Activated B cell treated with CpG ODN at 0.5 μM for 24 hours (primary cell): ENCODE measurements at regions of chr11 and their contacts with region 1.

Region 1: GRCh38 chr11:117946842-117947526 is 17.8 kb upstream of the TMPRSS13 start:
- DNase-seq: peak; percentile 79
- ATAC-seq: peak; percentile 34
- H3K4me3 Mint-ChIP-seq: no peak overlapping the region
- H3K27ac Mint-ChIP-seq: peak overlapping the region; percentile 62
- H3K4me1 Mint-ChIP-seq: peaks cover 60% of the 10 kb centered on the region
- H3K27me3 Mint-ChIP-seq: peaks cover 2% of the 10 kb centered on the region
- CTCF ChIP-seq: peak; percentile 86

Region 2: GRCh38 chr11:117807482-117808327 is 139.3 kb before region 1 on chr11:
- CTCF ChIA-PET with region 1: interaction called, 110 read pairs
- POLR2A ChIA-PET with region 1: interaction called, 7 read pairs
- intact Hi-C with region 1: loop called (anchors 1 kb)
- DNase-seq: peak; percentile 73
- ATAC-seq: peak; percentile 87
- H3K4me3 Mint-ChIP-seq: no peak overlapping the region
- H3K27ac Mint-ChIP-seq: peak overlapping the region; percentile 38
- H3K4me1 Mint-ChIP-seq: peaks cover 17% of the 10 kb centered on the region
- H3K27me3 Mint-ChIP-seq: peaks cover 5% of the 10 kb centered on the region
- CTCF ChIP-seq: peak; percentile 72

Region 3: GRCh38 chr11:117851106-117851505 is 95.9 kb before region 1 on chr11:
- CTCF ChIA-PET with region 1: interaction called, 129 read pairs
- POLR2A ChIA-PET with region 1: no interaction called
- intact Hi-C with region 1: no loop called
- DNase-seq: no peak
- ATAC-seq: no peak
- H3K4me3 Mint-ChIP-seq: no peak overlapping the region
- H3K27ac Mint-ChIP-seq: no peak overlapping the region
- H3K4me1 Mint-ChIP-seq: no peaks in the 10 kb centered on the region
- H3K27me3 Mint-ChIP-seq: peaks cover 31% of the 10 kb centered on the region
- CTCF ChIP-seq: no peak

Region 4: DNA sequence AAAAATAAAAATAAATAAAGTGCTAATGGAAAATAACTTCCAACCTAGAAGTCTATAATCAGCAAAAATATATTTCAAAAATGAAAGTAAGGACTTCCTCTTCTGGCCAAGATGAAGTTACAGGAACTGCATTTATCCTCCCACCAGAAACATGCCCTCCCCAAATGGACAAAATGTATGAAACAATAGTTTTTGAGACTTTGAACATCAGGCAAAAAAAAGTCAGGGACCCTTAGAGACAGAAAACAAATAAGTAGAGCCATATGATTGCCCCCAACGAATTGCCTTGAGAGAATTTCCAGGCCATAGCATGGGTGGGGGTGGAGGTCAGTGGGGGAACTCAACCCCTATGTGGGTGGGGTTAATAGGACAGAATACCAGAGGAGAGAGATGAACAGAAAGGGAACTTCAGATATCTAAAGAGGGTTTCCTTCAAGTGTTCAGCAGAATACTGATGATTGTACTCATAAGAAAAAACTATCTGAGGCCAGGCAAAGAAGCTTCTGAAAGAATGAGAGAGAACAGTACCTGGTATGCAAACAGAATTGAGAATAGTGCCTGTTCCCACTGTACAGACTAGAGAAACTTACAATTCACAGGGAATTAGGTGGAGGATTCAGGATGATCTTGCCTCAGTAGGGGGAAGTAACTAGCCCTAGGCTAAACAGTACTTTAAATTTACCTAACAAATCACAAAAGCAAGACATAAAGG is 12.6 kb after region 1 on chr11:
- CTCF ChIA-PET with region 1: interaction called, 5 read pairs
- POLR2A ChIA-PET with region 1: interaction called, 5 read pairs
- intact Hi-C with region 1: loop called (anchors 1 kb)
- DNase-seq: no peak
- ATAC-seq: peak; percentile 47
- H3K4me3 Mint-ChIP-seq: peak overlapping the region; percentile 0
- H3K27ac Mint-ChIP-seq: peak overlapping the region; percentile 64
- H3K4me1 Mint-ChIP-seq: peaks cover 23% of the 10 kb centered on the region
- H3K27me3 Mint-ChIP-seq: no peaks in the 10 kb centered on the region
- CTCF ChIP-seq: no peak

Region 5: DNA sequence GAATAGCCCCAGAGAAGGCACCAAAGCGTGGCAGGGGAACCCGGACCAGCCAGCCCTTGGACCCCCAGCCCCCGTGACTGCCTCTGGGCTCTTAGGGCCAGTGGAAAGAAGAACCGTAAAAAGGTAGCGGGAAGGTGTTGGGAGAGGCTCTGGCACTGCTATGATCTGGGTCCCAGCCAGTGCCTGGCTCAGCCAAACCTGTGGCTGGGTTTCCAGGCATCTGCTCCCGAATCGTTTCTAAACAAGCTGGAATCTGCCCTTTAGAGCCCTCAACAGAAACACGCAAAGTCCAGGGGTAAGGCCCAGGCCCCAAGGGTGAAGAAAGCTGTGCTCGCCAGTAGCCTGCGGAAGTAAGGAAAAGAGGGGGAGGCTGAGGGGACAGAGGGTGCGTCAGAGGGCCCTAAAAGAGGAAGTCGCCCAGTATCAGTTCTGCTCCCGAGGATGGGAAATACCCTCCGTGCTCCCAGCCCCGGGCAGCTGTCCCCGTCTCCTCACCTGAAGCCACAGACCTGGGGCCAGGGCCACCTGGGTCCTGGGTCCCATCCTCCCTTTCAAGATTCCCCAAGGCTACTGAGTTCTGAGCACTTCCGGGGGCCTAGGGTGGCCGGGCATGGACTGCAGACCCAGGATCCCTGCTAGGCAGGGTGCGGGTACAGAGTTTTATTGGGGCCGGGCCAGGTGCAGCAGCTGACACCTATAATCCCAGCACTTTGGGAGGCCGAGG is 63.9 kb after region 1 on chr11:
- CTCF ChIA-PET with region 1: interaction called, 16 read pairs
- POLR2A ChIA-PET with region 1: interaction called, 930 read pairs
- intact Hi-C with region 1: loop called (anchors 1 kb)
- DNase-seq: peak; percentile 77
- ATAC-seq: peak; percentile 67
- H3K4me3 Mint-ChIP-seq: peak overlapping the region; percentile 66
- H3K27ac Mint-ChIP-seq: peak overlapping the region; percentile 98
- H3K4me1 Mint-ChIP-seq: peaks cover 100% of the 10 kb centered on the region
- H3K27me3 Mint-ChIP-seq: no peaks in the 10 kb centered on the region
- CTCF ChIP-seq: no peak

Region 6: GRCh38 chr11:118171269-118172062 is 224.5 kb after region 1 on chr11:
- CTCF ChIA-PET with region 1: interaction called, 12 read pairs
- POLR2A ChIA-PET with region 1: no interaction called
- intact Hi-C with region 1: loop called (anchors 5 kb)
- DNase-seq: peak; percentile 58
- ATAC-seq: peak; percentile 86
- H3K4me3 Mint-ChIP-seq: no peak overlapping the region
- H3K27ac Mint-ChIP-seq: no peak overlapping the region
- H3K4me1 Mint-ChIP-seq: no peaks in the 10 kb centered on the region
- H3K27me3 Mint-ChIP-seq: peaks cover 34% of the 10 kb centered on the region
- CTCF ChIP-seq: peak; percentile 81